Motor neuron (in vitro differentiated cells): ENCODE measurements at regions of chr12 and their contacts with region 1.

Region 1: GRCh38 chr12:12081836-12082497 is 11.2 kb downstream of the BCL2L14 start:
- ATAC-seq: peak; percentile 38 to 95 (median 50)
- H3K4me3 ChIP-seq: no peak overlapping the region
- H3K27ac ChIP-seq: no peak overlapping the region
- H3K4me1 ChIP-seq: peaks cover 9 to 10% of the 10 kb centered on the region in 2 donors

Region 2: GRCh38 chr12:10701131-10701681 is 1380.8 kb before region 1 on chr12:
- in situ Hi-C with region 1: no loop called
- ATAC-seq: peak in 3 of 8 experiments; percentile 5 to 44 (median 10)
- H3K4me3 ChIP-seq: no peak overlapping the region
- H3K27ac ChIP-seq: no peak overlapping the region
- H3K4me1 ChIP-seq: no peaks in the 10 kb centered on the region

Region 3: GRCh38 chr12:12319451-12320183 is 237.7 kb after region 1 on chr12:
- in situ Hi-C with region 1: loop called in 2 of 9 experiments (anchors 10 to 25 kb)
- ATAC-seq: peak in 4 of 8 experiments; percentile 18 to 81 (median 36)
- H3K4me3 ChIP-seq: no peak overlapping the region
- H3K27ac ChIP-seq: no peak overlapping the region
- H3K4me1 ChIP-seq: peaks cover 6 to 11% of the 10 kb centered on the region in 2 donors

Region 4: DNA sequence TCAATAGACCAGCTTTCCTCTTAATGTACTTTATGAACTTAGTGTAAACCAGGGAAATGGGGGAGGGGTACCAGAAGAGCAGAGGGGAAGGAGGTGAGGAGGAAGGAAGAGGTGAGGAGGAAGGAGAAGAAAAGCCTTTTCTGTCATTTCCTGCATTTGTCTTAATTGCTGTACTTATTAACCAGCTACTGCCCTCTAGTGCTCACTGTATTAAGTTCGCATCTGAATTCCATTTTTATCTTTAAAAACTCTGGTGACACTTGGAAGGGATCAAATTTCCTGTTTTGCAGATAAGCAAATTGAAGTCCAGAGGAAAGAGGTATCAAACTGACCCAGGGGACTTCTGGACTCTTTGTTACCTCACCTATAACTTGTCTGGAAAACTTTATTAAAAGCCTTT is 245.8 kb after region 1 on chr12:
- in situ Hi-C with region 1: loop called in 3 of 9 experiments (anchors 10 to 25 kb)
- ATAC-seq: peak in 2 of 8 experiments; percentile 33 to 45
- H3K4me3 ChIP-seq: no peak overlapping the region
- H3K27ac ChIP-seq: no peak overlapping the region
- H3K4me1 ChIP-seq: peaks cover 0 to 7% of the 10 kb centered on the region in 2 donors

Region 5: DNA sequence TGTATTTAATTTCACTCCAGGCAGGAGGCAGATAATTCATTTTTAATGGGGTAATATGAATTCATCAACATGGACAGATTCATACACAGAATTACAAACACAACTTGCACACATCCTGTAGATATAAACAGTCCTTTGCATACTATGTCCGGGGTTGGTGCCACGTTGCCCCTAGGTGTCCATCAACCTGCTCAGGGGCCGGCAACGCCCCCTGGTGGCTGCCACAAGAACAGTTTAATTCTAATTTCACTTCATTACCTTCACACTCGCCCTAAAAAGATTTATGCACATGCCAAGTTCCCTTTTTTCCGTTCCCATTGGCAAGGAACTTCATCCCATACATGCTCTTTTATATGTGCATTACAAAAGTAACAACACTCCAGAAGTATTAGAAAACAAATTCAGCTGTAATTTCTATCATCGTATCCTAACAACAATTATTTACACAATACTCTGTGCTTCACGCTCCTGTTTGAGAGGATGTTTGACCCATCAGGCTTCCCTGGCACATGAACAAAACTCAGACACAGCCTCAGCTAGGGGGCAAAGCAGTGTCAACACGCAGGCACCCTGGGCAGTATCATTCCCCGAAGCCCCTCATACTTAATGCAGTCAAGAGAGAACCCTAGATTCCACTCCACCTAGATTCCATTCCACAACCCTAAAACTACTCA is 252.5 kb after region 1 on chr12:
- in situ Hi-C with region 1: loop called in 2 of 9 experiments (anchors 10 to 25 kb)
- ATAC-seq: peak; percentile 13 to 70 (median 44)
- H3K4me3 ChIP-seq: no peak overlapping the region
- H3K27ac ChIP-seq: no peak overlapping the region
- H3K4me1 ChIP-seq: no peaks in the 10 kb centered on the region